Activated CD8-positive, alpha-beta memory T cell treated with anti-CD3 and anti-CD28 coated beads, Interleukin-2, amount 10 ng/mL, durations not matched to agents 7 days and 5 days (primary cell): ENCODE measurements at regions of chr7 and their contacts with region 1.

Region 1: GRCh38 chr7:94087664-94088352 is 83.7 kb upstream of the BET1 start:
- DNase-seq: peak; percentile 72
- ATAC-seq: peak; percentile 97
- H3K4me3 Mint-ChIP-seq: peak overlapping the region; percentile 67
- H3K27ac Mint-ChIP-seq: peak overlapping the region; percentile 62
- H3K4me1 Mint-ChIP-seq: peaks cover 5% of the 10 kb centered on the region
- H3K27me3 Mint-ChIP-seq: peaks cover 51% of the 10 kb centered on the region

Region 2: DNA sequence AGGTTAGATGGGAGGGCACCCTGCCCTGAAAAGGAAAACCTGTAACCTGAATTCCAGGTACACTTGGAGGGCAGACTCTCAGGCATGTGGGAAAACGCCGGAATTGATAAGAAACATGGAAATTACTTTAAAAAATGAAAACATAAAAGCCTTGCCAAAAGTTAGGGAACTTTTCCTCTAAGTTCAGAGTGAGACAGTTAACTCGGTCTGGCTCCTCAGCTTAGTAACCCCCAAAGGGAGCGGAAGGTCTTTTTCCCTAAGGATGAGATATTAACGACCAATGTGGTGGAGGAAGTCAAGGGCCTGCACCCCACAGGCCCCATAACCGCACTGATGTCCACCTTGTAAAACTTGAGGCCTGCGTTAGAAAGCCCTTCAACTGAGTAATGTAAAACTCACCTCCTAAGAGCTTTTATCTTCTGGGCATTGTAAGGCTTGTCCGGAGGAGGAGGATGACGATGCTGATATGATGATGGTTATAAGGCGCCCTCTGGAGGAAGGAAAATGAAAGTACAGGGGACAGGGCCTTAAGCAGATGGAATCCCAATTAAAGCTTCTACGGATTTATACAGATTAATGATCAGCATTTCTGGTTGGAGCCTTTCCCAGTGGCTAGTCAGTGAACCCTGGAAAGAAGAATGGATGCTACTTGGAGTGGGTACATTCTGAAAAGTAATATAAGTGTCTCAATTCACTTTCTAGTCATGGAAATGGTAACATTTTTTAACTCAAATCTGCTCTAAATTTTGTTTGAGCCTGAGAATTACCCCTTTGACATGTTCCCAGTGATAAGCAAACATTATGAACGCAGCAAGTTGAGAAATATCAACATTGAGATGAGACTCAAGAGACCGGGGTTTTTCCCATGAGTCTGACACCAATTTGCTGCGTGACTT is 307.6 kb after region 1 on chr7:
- CTCF ChIA-PET with region 1: interaction called, 10 read pairs
- DNase-seq: peak; percentile 59
- ATAC-seq: peak; percentile 72
- H3K4me3 Mint-ChIP-seq: peak overlapping the region; percentile 56
- H3K27ac Mint-ChIP-seq: peak overlapping the region; percentile 49
- H3K4me1 Mint-ChIP-seq: peaks cover 25% of the 10 kb centered on the region
- H3K27me3 Mint-ChIP-seq: peaks cover 13% of the 10 kb centered on the region